Posterior cingulate gyrus (tissue), 11 donors: ENCODE measurements at regions of chr15 and their contacts with region 1.

Region 1: GRCh38 chr15:47196057-47196456 is 521.2 kb upstream of the SEMA6D start:
- DNase-seq: peak; percentile 67 to 98 (median 84)

Region 2: DNA sequence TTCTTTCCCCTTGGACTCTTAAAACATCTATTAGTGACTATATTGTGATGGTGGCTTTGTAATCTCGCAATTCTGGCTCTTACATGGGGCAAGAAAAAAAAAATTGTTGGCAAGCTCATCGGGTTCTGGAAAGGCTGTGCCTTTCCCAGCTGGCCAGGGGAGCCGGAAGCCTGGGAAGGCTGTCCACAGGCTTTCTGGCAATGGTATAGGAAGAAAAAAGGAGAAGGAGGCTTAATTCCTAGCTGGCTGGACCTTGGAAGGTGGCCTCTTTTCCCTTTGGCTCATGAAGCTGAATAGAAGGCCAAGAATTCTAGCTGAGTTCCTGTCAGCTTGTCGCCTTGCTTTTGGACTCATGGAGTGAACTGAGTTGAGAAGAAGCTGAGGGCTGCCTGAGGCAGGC is 277.8 kb after region 1 on chr15:
- intact Hi-C with region 1: loop called (anchors 10 kb)
- DNase-seq: peak in 3 of 10 donors; percentile 8 to 75 (median 73)

Region 3: GRCh38 chr15:47717036-47717611 is 521.1 kb after region 1 on chr15 and contains the start of gene SEMA6D:
- intact Hi-C with region 1: loop called (anchors 10 kb)
- DNase-seq: peak; percentile 67 to 97 (median 76)

Region 4: DNA sequence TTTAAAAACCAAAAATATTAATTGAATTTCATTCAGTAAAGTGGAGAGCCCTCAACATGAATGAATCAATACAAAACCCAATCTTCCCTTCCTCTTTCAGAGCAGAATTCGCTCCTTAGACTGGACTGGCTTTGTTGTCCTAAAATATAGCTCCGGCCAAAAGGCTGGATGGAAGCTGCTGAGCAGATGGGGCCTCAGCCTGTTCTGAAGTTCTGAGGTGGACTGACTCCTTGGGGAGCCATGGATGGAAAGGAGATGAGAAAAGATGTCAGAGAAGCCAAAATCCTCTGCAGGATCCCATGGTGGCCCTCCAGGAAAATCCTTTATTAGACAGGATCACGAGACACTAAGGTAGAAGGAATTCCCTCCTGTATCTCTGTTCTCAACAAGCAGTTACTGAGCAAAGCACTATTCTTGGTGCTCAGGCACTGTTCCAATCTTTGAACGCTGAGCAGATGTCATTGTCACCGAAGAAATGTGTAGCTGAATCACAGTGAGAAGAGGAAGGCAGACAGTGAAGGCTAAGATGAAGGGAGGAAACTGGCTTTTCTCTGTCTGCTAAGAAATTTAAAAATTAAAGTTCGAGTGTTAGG is 643.3 kb after region 1 on chr15:
- intact Hi-C with region 1: no loop called
- DNase-seq: peak in 4 of 10 donors; percentile 16 to 78 (median 28)

Region 5: GRCh38 chr15:47987908-47988532 is 792.0 kb after region 1 on chr15:
- intact Hi-C with region 1: loop called (anchors 1 kb)
- DNase-seq: peak in 1 of 10 donors; percentile 33

Region 6: GRCh38 chr15:48250640-48251076 is 1054.6 kb after region 1 on chr15:
- intact Hi-C with region 1: loop called (anchors 10 kb)
- DNase-seq: peak in 1 of 10 donors; percentile 30

Region 7: GRCh38 chr15:48285329-48286214 is 1089.5 kb after region 1 on chr15:
- intact Hi-C with region 1: loop called (anchors 5 kb)
- DNase-seq: peak in 4 of 10 donors; percentile 18 to 38 (median 35)

Region 8: DNA sequence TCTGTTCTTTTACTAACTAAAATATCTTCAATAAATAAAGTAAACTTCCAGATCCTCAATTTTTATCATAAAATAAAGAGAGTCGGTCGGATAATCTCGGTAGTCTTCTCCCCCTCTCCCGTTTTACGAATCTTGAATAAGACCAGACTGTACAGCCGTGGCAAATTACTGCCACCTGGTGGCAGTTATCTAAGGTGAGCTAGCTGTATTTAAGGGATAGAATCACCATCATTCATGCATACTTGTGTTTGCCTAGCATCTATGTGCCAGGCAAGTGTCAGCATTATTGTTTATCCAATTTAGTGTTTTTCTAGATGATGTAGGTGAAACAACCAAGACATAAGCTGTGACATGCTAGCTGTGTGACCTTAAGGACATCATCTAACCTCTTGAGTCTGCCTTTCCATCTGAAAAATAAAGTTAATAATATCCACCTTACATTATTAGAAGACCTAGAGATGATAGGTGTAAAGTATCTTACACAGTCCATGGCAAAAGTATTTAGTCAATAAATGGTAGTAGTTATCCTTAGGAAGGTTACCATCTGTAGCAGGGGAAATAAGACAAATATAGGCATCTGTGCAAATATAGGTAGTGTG is 1156.5 kb after region 1 on chr15:
- intact Hi-C with region 1: loop called (anchors 2 kb)
- DNase-seq: peak in 6 of 10 donors; percentile 27 to 88 (median 49)